MCF 10A (cell line): ENCODE measurements at regions of chr10 and their contacts with region 1.

Region 1: DNA sequence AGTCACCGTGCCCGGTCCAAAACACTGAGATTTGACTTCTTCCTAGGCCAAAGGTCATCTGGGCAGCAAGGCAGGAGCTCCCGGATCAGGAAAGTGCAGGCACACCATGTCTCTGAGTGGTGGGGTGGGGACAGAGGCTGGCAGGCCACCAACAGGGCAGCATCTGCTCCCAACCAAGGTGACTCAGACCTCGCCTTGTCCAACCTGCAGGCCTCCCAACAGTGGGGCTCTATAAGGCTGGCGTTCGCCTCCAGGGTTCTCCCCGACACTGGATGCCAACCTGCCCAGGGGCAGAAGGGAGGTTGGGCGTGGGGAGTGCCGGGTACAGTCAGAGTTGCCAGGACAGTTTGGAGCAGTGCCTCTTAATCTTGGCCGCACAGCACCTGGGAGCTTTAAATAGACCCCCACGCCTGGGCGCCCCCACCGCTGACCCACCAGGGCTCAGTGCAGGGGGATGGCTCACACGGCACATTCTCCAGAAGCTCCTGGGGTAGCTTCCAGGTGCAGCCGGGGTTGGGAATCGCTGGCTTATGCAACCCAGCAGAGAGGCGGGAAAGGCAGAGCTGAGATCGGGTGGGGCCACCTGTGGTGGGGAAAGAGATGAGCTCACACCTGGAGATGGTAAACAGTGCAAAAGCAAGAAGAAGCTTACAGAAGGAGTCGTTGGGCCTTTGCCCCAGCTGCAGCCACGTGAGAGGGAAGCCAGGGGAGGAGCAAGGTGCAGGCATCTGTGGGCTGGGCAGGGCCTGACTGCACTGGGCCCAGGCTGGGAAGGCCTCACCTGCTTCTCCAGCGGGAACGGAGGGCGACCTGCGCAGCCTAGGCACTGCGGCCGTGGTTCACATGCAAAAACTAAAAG is 10.8 kb downstream of the CALML5 start:
- DNase-seq: peak; percentile 93
- H3K4me3 Mint-ChIP-seq: peak overlapping the region; percentile 57
- H3K27ac Mint-ChIP-seq: peak overlapping the region; percentile 94
- H3K4me1 Mint-ChIP-seq: peaks cover 14% of the 10 kb centered on the region
- H3K27me3 Mint-ChIP-seq: no peaks in the 10 kb centered on the region
- CTCF ChIP-seq: no peak

Region 2: GRCh38 chr10:5446390-5446926 is 42.1 kb before region 1 on chr10:
- CTCF ChIA-PET with region 1: interaction called, 4 read pairs
- POLR2A ChIA-PET with region 1: interaction called, 25 read pairs
- intact Hi-C with region 1: loop called (anchors 1 kb)
- DNase-seq: peak; percentile 79
- H3K4me3 Mint-ChIP-seq: peak overlapping the region; percentile 81
- H3K27ac Mint-ChIP-seq: peak overlapping the region; percentile 89
- H3K4me1 Mint-ChIP-seq: peaks cover 24% of the 10 kb centered on the region
- H3K27me3 Mint-ChIP-seq: no peaks in the 10 kb centered on the region
- CTCF ChIP-seq: no peak

Region 3: GRCh38 chr10:5525561-5526341 is 37.2 kb after region 1 on chr10:
- CTCF ChIA-PET with region 1: no interaction called
- POLR2A ChIA-PET with region 1: interaction called, 14 read pairs
- intact Hi-C with region 1: no loop called
- DNase-seq: peak; percentile 76
- H3K4me3 Mint-ChIP-seq: peak overlapping the region; percentile 19
- H3K27ac Mint-ChIP-seq: no peak overlapping the region
- H3K4me1 Mint-ChIP-seq: peaks cover 8% of the 10 kb centered on the region
- H3K27me3 Mint-ChIP-seq: no peaks in the 10 kb centered on the region
- CTCF ChIP-seq: no peak

Region 4: DNA sequence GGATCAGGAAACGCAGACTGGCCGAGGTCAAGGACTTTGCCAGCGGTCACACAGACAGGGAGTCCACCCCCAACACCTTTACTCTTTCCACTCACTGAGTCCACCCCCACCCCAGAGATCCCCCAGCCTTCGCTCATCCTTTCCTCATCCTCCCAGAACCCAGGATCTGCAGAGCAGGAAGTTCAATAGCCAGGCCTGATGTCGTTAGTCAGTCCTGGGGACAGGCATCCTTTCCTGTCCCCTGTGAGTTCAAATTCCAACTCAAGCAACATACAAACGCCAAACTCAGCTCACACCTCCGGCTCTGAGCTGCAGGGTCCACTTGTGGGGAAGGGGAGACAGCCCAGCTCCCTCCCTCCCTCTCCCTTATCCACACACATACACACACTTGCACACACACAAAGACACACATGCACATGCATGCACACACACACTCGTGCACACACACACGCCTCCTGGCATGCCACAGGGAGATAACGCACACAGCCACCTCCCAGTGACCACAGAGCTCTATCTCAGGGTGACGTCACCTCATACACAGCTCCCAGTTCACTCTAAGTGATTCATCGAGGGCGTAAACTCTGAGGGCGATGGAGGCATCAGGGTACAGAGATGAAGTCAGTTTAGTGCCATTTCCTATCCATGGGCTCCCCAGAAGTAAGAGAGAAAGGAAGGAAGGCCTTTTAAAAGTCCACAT is 60.1 kb after region 1 on chr10:
- CTCF ChIA-PET with region 1: interaction called, 5 read pairs
- POLR2A ChIA-PET with region 1: interaction called, 63 read pairs
- intact Hi-C with region 1: no loop called
- DNase-seq: peak; percentile 91
- H3K4me3 Mint-ChIP-seq: no peak overlapping the region
- H3K27ac Mint-ChIP-seq: no peak overlapping the region
- H3K4me1 Mint-ChIP-seq: peaks cover 38% of the 10 kb centered on the region
- H3K27me3 Mint-ChIP-seq: no peaks in the 10 kb centered on the region
- CTCF ChIP-seq: no peak

Region 5: DNA sequence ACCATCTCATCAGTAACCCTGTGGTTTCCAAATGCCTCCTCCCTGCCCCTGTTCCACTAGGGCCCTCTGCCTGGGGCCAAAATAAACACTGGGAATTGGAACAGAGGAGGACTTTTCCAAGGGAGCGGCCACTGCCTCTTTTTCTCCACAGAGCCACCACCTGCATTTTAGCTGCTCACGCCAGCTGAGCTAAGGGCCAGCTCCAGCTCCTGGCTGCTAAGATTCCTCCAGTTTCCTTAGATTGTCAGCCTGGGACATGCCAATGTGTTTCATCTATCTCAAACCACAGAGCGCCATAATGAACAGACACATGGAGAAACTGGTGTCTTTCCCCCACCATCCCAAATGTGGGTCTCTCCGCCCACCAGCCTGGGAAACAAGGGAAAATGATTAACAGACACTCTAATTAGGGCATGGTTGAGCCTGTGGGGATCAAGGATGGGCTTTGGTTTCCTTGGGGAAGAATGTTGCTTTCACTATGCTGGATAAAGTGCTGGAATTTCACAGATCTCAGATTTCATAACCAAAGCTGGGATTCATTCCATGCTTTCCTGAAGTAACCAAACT is 125.7 kb after region 1 on chr10:
- CTCF ChIA-PET with region 1: interaction called, 3 read pairs
- POLR2A ChIA-PET with region 1: interaction called, 20 read pairs
- intact Hi-C with region 1: no loop called
- DNase-seq: peak; percentile 86
- H3K4me3 Mint-ChIP-seq: peak overlapping the region; percentile 19
- H3K27ac Mint-ChIP-seq: peak overlapping the region; percentile 93
- H3K4me1 Mint-ChIP-seq: peaks cover 72% of the 10 kb centered on the region
- H3K27me3 Mint-ChIP-seq: no peaks in the 10 kb centered on the region
- CTCF ChIP-seq: no peak